CD8-positive, alpha-beta T cell (primary cell): ENCODE measurements at regions of chr5 and their contacts with region 1.

Region 1: GRCh38 chr5:150409638-150410523 is 2.8 kb downstream of the CD74 start:
- DNase-seq: peak in 8 of 9 experiments; percentile 15 to 80 (median 44)
- ATAC-seq: no peak
- H3K4me3 ChIP-seq: peak overlapping the region; percentile 88 to 90
- H3K4me3 Mint-ChIP-seq: peak overlapping the region; percentile 100
- H3K27ac ChIP-seq: peak overlapping the region; percentile 24 to 99
- H3K27ac Mint-ChIP-seq: peak overlapping the region; percentile 100
- H3K4me1 ChIP-seq: peaks cover 39% of the 10 kb centered on the region
- H3K4me1 Mint-ChIP-seq: peaks cover 45% of the 10 kb centered on the region
- H3K27me3 ChIP-seq: no peaks in the 10 kb centered on the region
- H3K27me3 Mint-ChIP-seq: no peaks in the 10 kb centered on the region
- CTCF ChIP-seq: no peak

Region 2: DNA sequence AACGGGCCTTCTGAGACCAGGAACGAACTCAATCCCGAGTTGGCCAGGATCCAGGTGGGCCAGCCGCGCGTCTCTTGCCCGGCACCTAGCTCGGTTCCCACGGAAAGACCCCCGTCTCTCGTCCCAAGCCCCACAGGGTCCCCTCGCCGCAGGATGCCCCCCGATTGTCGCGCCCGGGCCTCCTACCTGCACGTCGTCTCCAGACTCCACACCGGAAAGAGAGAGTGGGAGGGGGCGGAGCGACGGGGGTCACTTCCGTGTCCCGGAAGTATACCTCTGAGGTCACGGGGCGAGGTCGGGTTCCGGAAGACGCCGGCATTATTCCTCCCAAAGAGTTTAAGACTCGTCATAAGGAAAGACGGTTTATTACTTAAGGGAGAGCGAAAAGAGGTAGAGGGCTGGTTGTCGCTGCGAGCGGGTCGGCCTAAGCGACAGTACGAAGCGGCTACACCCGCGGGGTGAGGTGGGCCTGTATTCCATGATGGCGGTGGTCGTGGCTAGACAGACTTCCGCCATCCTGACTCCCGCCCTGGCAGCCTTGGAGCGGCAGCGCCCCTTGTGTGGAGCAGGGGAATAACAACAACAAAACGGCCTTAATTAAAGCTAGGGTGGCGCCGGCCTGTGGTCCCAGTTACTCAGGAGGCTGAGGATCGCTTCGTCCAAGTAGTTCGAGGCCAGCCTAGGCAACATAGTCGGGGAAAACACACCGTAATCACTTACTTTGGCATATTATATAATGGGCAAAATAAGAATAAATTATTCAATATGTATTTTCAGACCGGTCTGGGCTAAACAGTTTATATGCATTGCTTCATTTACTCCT is 39.8 kb after region 1 on chr5 and contains the start of gene RPS14:
- CTCF ChIA-PET with region 1: no interaction called
- POLR2A ChIA-PET with region 1: interaction called, 12 read pairs
- intact Hi-C with region 1: loop called (anchors 1 kb)
- DNase-seq: peak; percentile 90 to 97 (median 95)
- ATAC-seq: peak; percentile 92
- H3K4me3 ChIP-seq: peak within 1 kb of the TSS; percentile 77 to 89
- H3K4me3 Mint-ChIP-seq: peak within 1 kb of the TSS; percentile 100
- H3K27ac ChIP-seq: peak within 1 kb of the TSS; percentile 93 to 98
- H3K27ac Mint-ChIP-seq: peak within 1 kb of the TSS; percentile 100
- H3K4me1 ChIP-seq: peaks cover 22% of the 10 kb centered on the region
- H3K4me1 Mint-ChIP-seq: peaks cover 36% of the 10 kb centered on the region
- H3K27me3 ChIP-seq: no peaks in the 10 kb centered on the region
- H3K27me3 Mint-ChIP-seq: no peaks in the 10 kb centered on the region
- CTCF ChIP-seq: peak; percentile 84
- total RNA-seq, gene RPS14: 5,604 to 5,613 TPM

Region 3: GRCh38 chr5:150464554-150465012 is 54.7 kb after region 1 on chr5:
- CTCF ChIA-PET with region 1: no interaction called
- POLR2A ChIA-PET with region 1: no interaction called
- intact Hi-C with region 1: no loop called
- DNase-seq: no peak
- ATAC-seq: no peak
- H3K4me3 ChIP-seq: no peak overlapping the region
- H3K4me3 Mint-ChIP-seq: no peak overlapping the region
- H3K27ac ChIP-seq: no peak overlapping the region
- H3K27ac Mint-ChIP-seq: no peak overlapping the region
- H3K4me1 ChIP-seq: no peaks in the 10 kb centered on the region
- H3K4me1 Mint-ChIP-seq: peaks cover 14% of the 10 kb centered on the region
- H3K27me3 ChIP-seq: no peaks in the 10 kb centered on the region
- H3K27me3 Mint-ChIP-seq: no peaks in the 10 kb centered on the region
- CTCF ChIP-seq: no peak

Region 4: GRCh38 chr5:150556859-150557498 is 147.1 kb after region 1 on chr5:
- CTCF ChIA-PET with region 1: no interaction called
- POLR2A ChIA-PET with region 1: no interaction called
- intact Hi-C with region 1: no loop called
- DNase-seq: no peak
- ATAC-seq: no peak
- H3K4me3 ChIP-seq: no peak overlapping the region
- H3K4me3 Mint-ChIP-seq: no peak overlapping the region
- H3K27ac ChIP-seq: no peak overlapping the region
- H3K27ac Mint-ChIP-seq: no peak overlapping the region
- H3K4me1 ChIP-seq: no peaks in the 10 kb centered on the region
- H3K4me1 Mint-ChIP-seq: no peaks in the 10 kb centered on the region
- H3K27me3 ChIP-seq: no peaks in the 10 kb centered on the region
- H3K27me3 Mint-ChIP-seq: no peaks in the 10 kb centered on the region
- CTCF ChIP-seq: no peak

Region 5: GRCh38 chr5:150700594-150701293 is 290.9 kb after region 1 on chr5 and contains the start of gene RBM22:
- CTCF ChIA-PET with region 1: no interaction called
- POLR2A ChIA-PET with region 1: interaction called, 7 read pairs
- intact Hi-C with region 1: loop called in 1 of 2 experiments (anchors 1 kb)
- DNase-seq: peak; percentile 82 to 96 (median 94)
- ATAC-seq: peak; percentile 90
- H3K4me3 ChIP-seq: peak within 1 kb of the TSS; percentile 80 to 81
- H3K4me3 Mint-ChIP-seq: no peak within 1 kb of the TSS
- H3K27ac ChIP-seq: peak within 1 kb of the TSS; percentile 94 to 97
- H3K27ac Mint-ChIP-seq: no peak within 1 kb of the TSS
- H3K4me1 ChIP-seq: peaks cover 19% of the 10 kb centered on the region
- H3K4me1 Mint-ChIP-seq: peaks cover 2% of the 10 kb centered on the region
- H3K27me3 ChIP-seq: no peaks in the 10 kb centered on the region
- H3K27me3 Mint-ChIP-seq: no peaks in the 10 kb centered on the region
- CTCF ChIP-seq: peak; percentile 85
- total RNA-seq, gene RBM22: 119 to 125 TPM